Gastrocnemius medialis (tissue), 4 donors: ENCODE measurements at regions of chr22 and their contacts with region 1.

Region 1: DNA sequence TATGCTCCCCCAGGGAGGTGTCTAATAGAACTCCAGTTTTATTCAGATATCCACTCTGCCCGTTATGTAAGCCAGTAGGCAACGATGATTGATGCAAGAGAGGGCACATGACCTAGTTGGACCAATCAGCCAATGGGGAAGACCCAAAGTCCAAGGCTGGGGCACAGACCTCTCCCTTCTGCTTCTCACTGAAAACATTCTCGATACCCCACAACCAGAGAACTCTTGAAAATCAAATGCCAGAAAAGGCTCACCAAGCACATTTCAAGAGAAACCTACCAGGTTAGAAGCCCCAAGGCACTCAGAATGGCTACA is 7.4 kb downstream of the HIRA start:
- DNase-seq: no peak
- ATAC-seq: no peak
- H3K4me3 ChIP-seq: no peak overlapping the region
- H3K27ac ChIP-seq: no peak overlapping the region
- H3K4me1 ChIP-seq: peaks cover 8 to 36% of the 10 kb centered on the region in 2 donors
- H3K27me3 ChIP-seq: no peaks in the 10 kb centered on the region
- CTCF ChIP-seq: no peak
- POLR2A ChIP-seq: no peak

Region 2: GRCh38 chr22:19295733-19296132 is 128.4 kb before region 1 on chr22:
- in situ Hi-C with region 1: no loop called
- intact Hi-C with region 1: no loop called
- DNase-seq: no peak
- ATAC-seq: no peak
- H3K4me3 ChIP-seq: no peak overlapping the region
- H3K27ac ChIP-seq: peak overlapping the region; percentile 1 to 100 (median 96)
- H3K4me1 ChIP-seq: peaks cover 9 to 16% of the 10 kb centered on the region in 2 donors
- H3K27me3 ChIP-seq: no peaks in the 10 kb centered on the region
- CTCF ChIP-seq: no peak
- POLR2A ChIP-seq: no peak

Region 3: GRCh38 chr22:19410941-19411689 is 13.0 kb before region 1 on chr22:
- in situ Hi-C with region 1: no loop called
- intact Hi-C with region 1: loop called (anchors 2 kb)
- DNase-seq: no peak
- ATAC-seq: peak; percentile 61 to 90
- H3K4me3 ChIP-seq: no peak overlapping the region
- H3K27ac ChIP-seq: peak overlapping the region in 2 of 4 donors; percentile 33 to 45
- H3K4me1 ChIP-seq: peaks cover 9 to 19% of the 10 kb centered on the region in 2 donors
- H3K27me3 ChIP-seq: no peaks in the 10 kb centered on the region
- CTCF ChIP-seq: no peak
- POLR2A ChIP-seq: no peak

Region 4: GRCh38 chr22:19607192-19608002 is 183.3 kb after region 1 on chr22:
- in situ Hi-C with region 1: no loop called
- intact Hi-C with region 1: no loop called
- DNase-seq: peak; percentile 27 to 56
- ATAC-seq: peak; percentile 35 to 43
- H3K4me3 ChIP-seq: no peak overlapping the region
- H3K27ac ChIP-seq: peak overlapping the region; percentile 16 to 78 (median 68)
- H3K4me1 ChIP-seq: peaks cover 15 to 20% of the 10 kb centered on the region in 2 donors
- H3K27me3 ChIP-seq: no peaks in the 10 kb centered on the region
- CTCF ChIP-seq: no peak
- POLR2A ChIP-seq: peak; percentile 55 to 64

Region 5: GRCh38 chr22:19844377-19845053 is 420.4 kb after region 1 on chr22:
- in situ Hi-C with region 1: no loop called
- intact Hi-C with region 1: no loop called
- DNase-seq: peak in 1 of 2 donors; percentile 59
- ATAC-seq: peak; percentile 47 to 61
- H3K4me3 ChIP-seq: no peak overlapping the region
- H3K27ac ChIP-seq: peak overlapping the region in 2 of 4 donors; percentile 20 to 54
- H3K4me1 ChIP-seq: peaks cover 25 to 28% of the 10 kb centered on the region in 2 donors
- H3K27me3 ChIP-seq: no peaks in the 10 kb centered on the region
- CTCF ChIP-seq: no peak
- POLR2A ChIP-seq: no peak